ENCODE measurements at regions of chr3 and their contacts with region 1.

Region 1: DNA sequence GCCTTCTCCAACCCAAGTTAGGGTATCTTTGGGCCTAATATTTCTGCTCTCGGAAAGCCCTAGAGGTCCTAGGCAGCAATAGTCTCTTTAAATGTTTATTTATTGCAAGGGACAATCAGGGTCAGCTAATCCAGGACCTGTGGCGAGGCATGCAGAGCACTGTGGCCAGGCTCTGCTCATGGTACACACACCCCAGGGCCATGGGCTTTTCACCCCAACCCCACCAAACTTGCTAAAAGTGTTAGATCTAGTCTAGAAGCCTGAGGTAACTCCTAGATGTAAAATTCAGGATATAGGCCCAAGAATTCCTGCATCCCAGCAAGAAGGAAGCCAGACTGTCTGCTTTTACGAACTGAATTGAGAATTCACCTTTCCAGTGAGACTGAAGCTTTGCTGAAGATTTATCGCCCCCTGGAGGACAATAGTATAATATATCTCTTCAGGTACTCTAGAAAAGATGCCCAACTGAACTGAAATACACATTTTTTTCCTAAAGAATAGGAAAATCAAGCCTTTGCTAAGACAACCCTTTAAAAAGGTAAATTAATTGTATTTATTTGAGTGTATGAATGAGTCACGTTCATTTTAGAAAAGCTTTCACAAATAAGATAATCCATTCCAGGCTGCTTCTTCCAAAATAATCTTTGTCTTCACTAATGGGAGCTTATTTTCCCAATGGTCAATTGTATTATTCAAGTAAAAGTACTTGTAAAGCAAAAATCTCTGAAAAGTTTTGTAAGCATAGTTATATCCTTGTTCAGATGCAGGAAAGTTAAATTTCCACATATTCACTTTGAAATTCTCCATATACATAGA is 89.8 kb downstream of the LRRC3B start:
- DNase-seq: no peak
- H3K4me3 ChIP-seq: no peak overlapping the region
- H3K27ac ChIP-seq: no peak overlapping the region
- H3K4me1 ChIP-seq: no peaks in the 10 kb centered on the region
- H3K27me3 ChIP-seq: no peaks in the 10 kb centered on the region
- CTCF ChIP-seq: peak; percentile 22 to 69 (median 62)
- POLR2A ChIP-seq: no peak

Region 2: DNA sequence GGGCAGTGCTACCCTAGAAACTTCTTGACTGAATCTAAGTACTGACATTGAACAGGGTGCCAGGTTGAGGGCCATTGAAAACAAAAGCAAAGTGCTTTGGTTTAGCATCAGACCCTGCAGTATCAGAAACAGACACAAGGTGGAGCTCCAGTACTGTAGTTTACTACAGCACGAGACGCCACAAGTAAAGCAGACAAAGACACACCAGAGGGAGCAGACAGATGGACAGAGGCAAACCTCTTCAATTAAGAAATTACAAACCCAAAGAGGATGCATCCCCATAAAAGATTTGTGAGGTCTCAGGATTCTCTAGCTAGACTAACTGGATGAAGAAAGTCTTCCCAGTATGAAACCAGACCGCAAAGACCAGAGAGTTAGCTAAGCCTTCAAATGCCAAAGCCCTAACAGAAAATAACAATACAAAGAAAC is 1064.3 kb before region 1 on chr3:
- intact Hi-C with region 1: loop called (anchors 5 kb)
- DNase-seq: peak; percentile 64
- H3K4me3 ChIP-seq: no peak overlapping the region
- H3K27ac ChIP-seq: no peak overlapping the region
- H3K4me1 ChIP-seq: no peaks in the 10 kb centered on the region
- H3K27me3 ChIP-seq: no peaks in the 10 kb centered on the region
- CTCF ChIP-seq: peak; percentile 67 to 87 (median 78)
- POLR2A ChIP-seq: no peak

Region 3: GRCh38 chr3:25849641-25850385 is 862.6 kb before region 1 on chr3:
- intact Hi-C with region 1: loop called (anchors 5 kb)
- DNase-seq: no peak
- H3K4me3 ChIP-seq: no peak overlapping the region
- H3K27ac ChIP-seq: no peak overlapping the region
- H3K4me1 ChIP-seq: no peaks in the 10 kb centered on the region
- H3K27me3 ChIP-seq: no peaks in the 10 kb centered on the region
- CTCF ChIP-seq: no peak
- POLR2A ChIP-seq: no peak

Region 4: DNA sequence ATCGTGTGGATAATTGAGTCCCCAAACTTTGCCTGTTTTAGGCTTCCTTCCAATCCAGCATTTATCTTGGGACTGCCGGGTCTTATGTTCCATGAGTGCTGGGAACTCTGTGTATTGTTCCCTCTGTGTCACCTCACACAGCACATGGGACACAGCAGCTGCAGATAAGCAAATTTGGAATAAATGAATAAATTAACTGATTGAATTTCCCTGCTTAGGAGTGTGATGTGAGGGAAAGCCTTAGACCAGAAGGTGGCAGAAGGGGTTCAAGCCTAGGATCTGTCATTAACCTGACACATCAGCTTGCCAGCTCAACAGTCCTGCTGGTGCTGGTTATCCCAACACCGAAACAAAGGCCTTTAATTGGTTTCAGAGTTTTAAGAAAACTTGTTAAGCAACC is 808.2 kb before region 1 on chr3:
- intact Hi-C with region 1: loop called (anchors 5 kb)
- DNase-seq: no peak
- H3K4me3 ChIP-seq: no peak overlapping the region
- H3K27ac ChIP-seq: no peak overlapping the region
- H3K4me1 ChIP-seq: peaks cover 3% of the 10 kb centered on the region
- H3K27me3 ChIP-seq: no peaks in the 10 kb centered on the region
- CTCF ChIP-seq: no peak
- POLR2A ChIP-seq: no peak

Measured in prostate gland (tissue), 2 donors.